ENCODE measurements at regions of chr5 and their contacts with region 1.

Region 1: GRCh38 chr5:134527146-134527960 is 1.9 kb downstream of the JADE2 start:
- DNase-seq: peak; percentile 84
- H3K4me3 ChIP-seq: peak overlapping the region; percentile 3 to 76 (median 46)
- H3K27ac ChIP-seq: peak overlapping the region; percentile 56
- H3K4me1 ChIP-seq: peaks cover 20% of the 10 kb centered on the region
- H3K27me3 ChIP-seq: no peaks in the 10 kb centered on the region
- CTCF ChIP-seq: peak; percentile 75 to 90
- POLR2A ChIP-seq: peak; percentile 46

Region 2: DNA sequence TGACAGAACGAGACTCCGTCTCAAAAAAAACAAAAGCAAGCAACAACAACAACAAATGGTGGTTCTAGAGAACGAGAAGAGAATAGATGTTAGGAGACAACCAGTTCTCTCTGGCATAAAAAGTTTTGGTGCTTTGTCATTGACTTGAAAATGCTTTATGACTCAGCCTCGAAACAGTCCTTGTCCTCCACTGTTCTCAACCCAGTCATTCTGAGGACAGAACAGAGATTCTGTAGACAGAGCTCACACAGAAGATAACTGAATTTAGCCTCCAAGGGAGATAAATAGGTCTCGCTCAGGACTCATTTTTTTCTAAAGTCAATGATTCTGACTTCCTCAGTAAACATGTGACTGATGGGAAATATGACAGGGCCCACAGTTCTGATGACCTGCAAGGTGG is 839.0 kb before region 1 on chr5:
- CTCF ChIA-PET with region 1: no interaction called
- POLR2A ChIA-PET with region 1: no interaction called
- dilution Hi-C with region 1: no loop called
- intact Hi-C with region 1: no loop called
- DNase-seq: no peak
- H3K4me3 ChIP-seq: no peak overlapping the region
- H3K27ac ChIP-seq: no peak overlapping the region
- H3K4me1 ChIP-seq: no peaks in the 10 kb centered on the region
- H3K27me3 ChIP-seq: peaks cover 0 to 6% of the 10 kb centered on the region in 2 experiments
- CTCF ChIP-seq: no peak
- POLR2A ChIP-seq: no peak

Region 3: DNA sequence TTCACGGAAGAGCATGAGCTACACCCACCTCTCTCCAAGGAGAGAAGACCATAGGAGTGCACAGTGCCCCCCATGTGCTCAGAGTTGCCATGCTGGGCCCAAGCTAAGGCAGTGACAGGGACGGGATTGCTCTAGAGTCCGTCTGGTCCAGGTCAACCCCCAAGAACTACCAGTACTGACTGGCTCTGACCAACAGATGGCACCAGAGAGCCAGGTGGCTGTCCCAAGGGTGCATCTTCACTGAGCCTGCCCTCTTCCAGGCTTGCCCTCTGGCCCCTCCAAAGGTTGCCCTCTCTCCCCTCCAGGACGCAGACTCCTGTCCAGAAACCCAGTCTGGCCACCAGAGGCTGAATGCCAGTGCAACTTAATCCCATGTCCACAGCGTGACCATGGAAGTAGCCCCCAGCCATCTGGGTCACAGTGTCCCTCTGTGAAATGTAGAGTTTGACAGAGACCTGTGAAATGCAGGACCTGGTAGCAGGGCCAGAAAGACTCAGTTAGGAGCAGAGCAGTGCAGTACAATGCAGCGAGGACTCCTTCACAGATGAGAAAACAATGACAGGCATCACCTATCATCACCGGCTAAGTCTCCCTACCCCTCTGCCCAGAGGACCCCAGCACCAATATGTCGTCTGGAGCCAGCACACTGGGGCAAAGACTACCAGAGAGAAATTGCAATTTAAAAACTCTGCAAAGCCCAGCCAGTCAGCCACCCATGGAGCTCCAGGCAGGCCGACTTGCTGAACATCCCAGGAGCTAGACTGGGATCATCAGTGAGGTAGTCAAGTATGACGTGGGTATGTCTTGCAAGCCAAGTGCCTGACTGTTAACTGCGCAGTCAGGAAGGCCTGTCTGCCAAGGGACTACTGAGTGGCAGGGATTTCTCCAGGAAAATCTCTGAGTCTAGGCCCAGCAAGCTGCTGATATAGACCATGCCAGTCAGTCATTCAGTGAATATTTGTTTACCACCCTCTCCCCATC is 342.9 kb before region 1 on chr5:
- CTCF ChIA-PET with region 1: no interaction called
- POLR2A ChIA-PET with region 1: no interaction called
- dilution Hi-C with region 1: no loop called
- intact Hi-C with region 1: no loop called
- DNase-seq: peak; percentile 55
- H3K4me3 ChIP-seq: no peak overlapping the region
- H3K27ac ChIP-seq: no peak overlapping the region
- H3K4me1 ChIP-seq: no peaks in the 10 kb centered on the region
- H3K27me3 ChIP-seq: no peaks in the 10 kb centered on the region
- CTCF ChIP-seq: peak; percentile 76 to 94
- POLR2A ChIP-seq: no peak

Region 4: DNA sequence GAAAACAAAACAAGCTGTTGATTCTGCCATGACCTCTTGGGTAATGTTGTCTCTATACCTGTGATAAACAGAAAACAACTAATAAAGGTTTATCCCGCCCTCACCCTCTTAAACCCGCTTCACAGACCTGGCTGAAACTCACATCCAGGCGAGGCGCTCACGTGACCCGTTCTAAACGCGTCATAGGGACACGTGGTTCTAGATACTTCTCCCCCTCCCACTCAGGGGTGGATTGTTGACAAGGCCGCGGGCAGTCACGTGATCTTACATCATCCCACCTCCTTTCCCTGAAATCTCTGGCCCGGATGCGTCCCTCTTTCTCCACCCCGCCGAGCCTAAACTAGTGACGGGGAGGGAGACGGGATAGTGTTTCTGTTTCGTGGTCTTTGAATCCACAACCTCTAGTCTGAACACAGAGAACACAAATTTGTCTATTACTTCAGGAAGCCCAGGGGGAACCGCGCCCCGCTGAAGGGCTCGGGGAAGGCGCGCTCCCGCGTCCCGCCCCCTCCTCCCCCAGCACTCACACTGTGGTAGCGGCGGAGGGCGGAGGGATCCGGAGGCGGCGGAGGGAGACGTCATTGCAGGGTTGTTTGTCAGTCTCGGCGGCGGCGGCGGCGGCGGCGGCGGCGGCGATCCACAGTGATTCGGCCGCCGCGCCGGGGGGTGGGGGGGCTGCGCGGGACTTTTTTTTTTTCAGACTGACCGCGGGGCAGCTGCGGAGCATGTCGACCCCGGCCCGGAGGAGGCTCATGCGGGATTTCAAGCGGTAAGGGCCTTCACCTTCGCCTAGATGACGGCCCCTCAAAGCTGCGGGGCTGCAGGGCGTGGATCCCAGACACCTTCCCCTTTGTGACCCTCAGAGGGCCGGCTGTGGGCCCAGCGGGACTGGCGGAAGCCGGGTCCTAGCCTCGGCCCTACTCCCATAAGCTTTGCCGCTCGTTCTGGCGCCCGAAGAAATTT is 156.2 kb before region 1 on chr5 and contains the start of gene UBE2B:
- CTCF ChIA-PET with region 1: interaction called, 7 read pairs
- POLR2A ChIA-PET with region 1: interaction called, 4 read pairs
- dilution Hi-C with region 1: no loop called
- intact Hi-C with region 1: loop called (anchors 1 kb)
- DNase-seq: peak; percentile 99
- H3K4me3 ChIP-seq: peak within 1 kb of the TSS; percentile 91 to 94 (median 93)
- H3K27ac ChIP-seq: peak within 1 kb of the TSS; percentile 97
- H3K4me1 ChIP-seq: peaks cover 11% of the 10 kb centered on the region
- H3K27me3 ChIP-seq: no peaks in the 10 kb centered on the region
- CTCF ChIP-seq: no peak
- POLR2A ChIP-seq: peak; percentile 90
- total RNA-seq, gene UBE2B: 109 and 110 TPM in 2 replicates

Region 5: GRCh38 chr5:134465816-134466240 is 61.5 kb before region 1 on chr5:
- CTCF ChIA-PET with region 1: interaction called, 29 read pairs
- POLR2A ChIA-PET with region 1: interaction called, 11 read pairs
- dilution Hi-C with region 1: no loop called
- intact Hi-C with region 1: loop called (anchors 1 kb)
- DNase-seq: peak; percentile 94
- H3K4me3 ChIP-seq: peak overlapping the region in 2 of 3 experiments; percentile 29 to 46
- H3K27ac ChIP-seq: peak overlapping the region; percentile 94
- H3K4me1 ChIP-seq: peaks cover 17% of the 10 kb centered on the region
- H3K27me3 ChIP-seq: no peaks in the 10 kb centered on the region
- CTCF ChIP-seq: no peak
- POLR2A ChIP-seq: peak; percentile 66

Region 6: DNA sequence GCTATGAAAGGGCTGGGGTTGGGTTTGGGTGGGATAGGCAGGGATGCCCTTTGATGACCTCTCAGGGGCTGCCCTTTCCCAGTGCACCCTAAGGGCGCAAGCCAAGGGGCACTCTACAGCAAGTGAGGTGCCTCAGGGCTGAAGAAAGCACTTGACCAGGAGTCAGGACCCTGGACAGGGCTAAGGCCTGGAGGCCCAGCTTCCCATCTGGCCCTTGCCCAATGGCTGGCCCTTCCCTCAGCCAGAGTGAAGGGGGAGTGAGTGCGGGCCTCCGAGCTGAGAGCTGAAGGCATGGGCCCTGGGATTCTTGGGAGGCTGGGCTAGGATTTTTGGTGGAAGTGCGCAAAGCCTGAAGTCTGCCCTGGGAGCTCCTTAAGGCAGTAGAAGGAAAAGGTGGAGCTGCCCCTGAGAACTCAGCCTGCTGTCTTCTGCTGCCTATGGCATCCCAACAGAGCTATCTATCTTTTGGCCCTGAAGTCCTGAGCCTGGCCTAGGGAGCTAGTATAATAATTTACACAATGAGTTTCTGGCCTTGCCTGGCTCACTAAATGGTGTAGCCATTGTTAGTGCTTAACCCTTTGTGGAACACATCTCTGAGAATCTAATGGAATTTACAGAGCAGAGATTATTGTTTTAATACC is 14.5 kb after region 1 on chr5:
- CTCF ChIA-PET with region 1: interaction called, 24 read pairs
- POLR2A ChIA-PET with region 1: interaction called, 5 read pairs
- dilution Hi-C with region 1: no loop called
- intact Hi-C with region 1: no loop called
- DNase-seq: peak; percentile 42
- H3K4me3 ChIP-seq: no peak overlapping the region
- H3K27ac ChIP-seq: no peak overlapping the region
- H3K4me1 ChIP-seq: no peaks in the 10 kb centered on the region
- H3K27me3 ChIP-seq: no peaks in the 10 kb centered on the region
- CTCF ChIP-seq: no peak
- POLR2A ChIP-seq: no peak

Region 7: DNA sequence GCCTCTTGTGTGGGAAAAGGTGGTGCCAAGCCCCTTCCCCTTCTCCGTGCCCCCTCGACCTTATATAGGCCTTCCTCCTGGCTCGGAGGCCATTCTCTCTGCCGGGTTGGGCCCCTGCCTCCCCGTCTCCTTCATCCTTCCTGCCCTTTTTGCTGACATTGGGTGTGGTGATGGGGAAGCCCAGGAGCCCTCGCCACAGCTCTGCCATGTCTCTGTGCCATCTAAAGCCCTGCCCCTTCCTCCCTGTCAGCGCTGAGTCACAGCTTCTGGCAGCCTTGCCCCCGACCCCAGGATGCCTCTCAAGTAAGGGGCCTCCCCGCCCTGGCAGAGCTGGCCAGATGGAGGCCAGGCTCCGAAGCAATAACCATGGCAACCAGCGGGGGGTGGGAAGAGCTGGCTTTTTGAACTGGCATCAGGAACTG is 28.5 kb after region 1 on chr5:
- CTCF ChIA-PET with region 1: interaction called, 26 read pairs
- POLR2A ChIA-PET with region 1: interaction called, 6 read pairs
- dilution Hi-C with region 1: no loop called
- intact Hi-C with region 1: loop called (anchors 1 kb)
- DNase-seq: peak; percentile 91
- H3K4me3 ChIP-seq: no peak overlapping the region
- H3K27ac ChIP-seq: peak overlapping the region; percentile 88
- H3K4me1 ChIP-seq: peaks cover 56% of the 10 kb centered on the region
- H3K27me3 ChIP-seq: no peaks in the 10 kb centered on the region
- CTCF ChIP-seq: no peak
- POLR2A ChIP-seq: no peak

Region 8: GRCh38 chr5:134568761-134569695 is 41.7 kb after region 1 on chr5:
- CTCF ChIA-PET with region 1: interaction called, 25 read pairs
- POLR2A ChIA-PET with region 1: no interaction called
- dilution Hi-C with region 1: no loop called
- intact Hi-C with region 1: no loop called
- DNase-seq: peak; percentile 83
- H3K4me3 ChIP-seq: no peak overlapping the region
- H3K27ac ChIP-seq: peak overlapping the region; percentile 61
- H3K4me1 ChIP-seq: peaks cover 36% of the 10 kb centered on the region
- H3K27me3 ChIP-seq: no peaks in the 10 kb centered on the region
- CTCF ChIP-seq: no peak
- POLR2A ChIP-seq: no peak

Region 9: GRCh38 chr5:134648425-134649162 is 121.2 kb after region 1 on chr5 and contains the start of gene SEC24A:
- CTCF ChIA-PET with region 1: no interaction called
- POLR2A ChIA-PET with region 1: no interaction called
- dilution Hi-C with region 1: no loop called
- intact Hi-C with region 1: loop called (anchors 1 kb)
- DNase-seq: peak; percentile 93
- H3K4me3 ChIP-seq: peak within 1 kb of the TSS; percentile 60 to 91 (median 73)
- H3K27ac ChIP-seq: peak within 1 kb of the TSS; percentile 94
- H3K4me1 ChIP-seq: peaks cover 9% of the 10 kb centered on the region
- H3K27me3 ChIP-seq: no peaks in the 10 kb centered on the region
- CTCF ChIP-seq: no peak
- POLR2A ChIP-seq: peak; percentile 91
- total RNA-seq, gene SEC24A: 28.6 and 30.0 TPM in 2 replicates